Tibial artery (tissue), 4 donors: ENCODE measurements at regions of chr17 and their contacts with region 1.

Region 1: GRCh38 chr17:51153210-51154072 is at the start of gene NME1:
- DNase-seq: peak; percentile 96 to 98
- H3K4me3 ChIP-seq: peak within 1 kb of the TSS; percentile 62 to 83
- H3K27ac ChIP-seq: peak within 1 kb of the TSS; percentile 79 to 82
- H3K4me1 ChIP-seq: peaks cover 0 to 21% (median 6%) of the 10 kb centered on the region in 4 donors
- H3K27me3 ChIP-seq: no peaks in the 10 kb centered on the region
- CTCF ChIP-seq: peak; percentile 66 to 79

Region 2: DNA sequence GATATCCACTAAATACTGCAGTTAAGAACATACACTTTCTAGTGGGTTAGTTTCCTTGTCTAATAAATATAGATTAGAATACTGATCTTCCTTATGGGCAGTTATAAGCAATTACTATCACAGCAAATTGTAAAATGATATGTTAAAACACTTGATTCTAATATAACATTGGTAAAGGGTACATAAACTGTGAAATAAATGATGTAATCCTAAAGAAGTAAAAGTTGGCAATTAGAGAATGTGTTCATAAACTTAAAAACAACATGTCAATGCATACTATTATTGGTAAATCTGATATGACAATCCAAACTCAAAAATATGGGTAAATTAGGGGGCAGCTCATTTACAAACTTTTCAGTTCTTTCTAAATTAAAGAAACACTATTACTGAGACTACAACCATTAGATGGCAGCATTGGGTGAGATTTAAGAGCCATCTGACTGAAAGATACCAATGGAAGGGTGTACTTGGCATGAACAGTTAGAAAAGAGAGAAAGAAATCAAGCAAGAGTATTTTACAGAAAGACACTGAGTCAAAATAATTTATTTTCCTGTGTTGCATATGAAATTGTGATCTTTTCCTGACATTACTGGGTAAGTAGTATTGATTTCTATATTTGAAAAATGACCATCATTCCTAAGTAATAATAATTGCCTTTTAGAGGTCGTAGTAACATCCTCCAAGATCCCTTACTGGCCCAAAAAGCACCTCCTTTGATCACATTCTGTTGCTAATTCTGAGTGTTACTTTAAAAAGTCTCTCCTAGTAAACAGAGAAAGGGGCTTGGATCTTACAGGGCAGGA is 152.4 kb before region 1 on chr17:
- intact Hi-C with region 1: loop called (anchors 2 kb)
- DNase-seq: no peak
- H3K4me3 ChIP-seq: no peak overlapping the region
- H3K27ac ChIP-seq: no peak overlapping the region
- H3K4me1 ChIP-seq: no peaks in the 10 kb centered on the region
- H3K27me3 ChIP-seq: no peaks in the 10 kb centered on the region
- CTCF ChIP-seq: peak; percentile 40 to 70

Region 3: GRCh38 chr17:51120739-51121617 is 32.5 kb before region 1 on chr17 and contains the start of gene SPAG9:
- intact Hi-C with region 1: loop called (anchors 2 kb)
- DNase-seq: peak; percentile 97 to 99
- H3K4me3 ChIP-seq: peak within 1 kb of the TSS; percentile 86 to 98
- H3K27ac ChIP-seq: peak within 1 kb of the TSS; percentile 97 to 99
- H3K4me1 ChIP-seq: peaks cover 0 to 41% (median 30%) of the 10 kb centered on the region in 4 donors
- H3K27me3 ChIP-seq: no peaks in the 10 kb centered on the region
- CTCF ChIP-seq: no peak

Region 4: GRCh38 chr17:51166197-51166986 is 13.0 kb after region 1 on chr17 and contains the start of gene NME2:
- intact Hi-C with region 1: loop called (anchors 2 kb)
- DNase-seq: peak; percentile 91 to 95
- H3K4me3 ChIP-seq: peak within 1 kb of the TSS; percentile 98 to 99
- H3K27ac ChIP-seq: peak within 1 kb of the TSS; percentile 88 to 98
- H3K4me1 ChIP-seq: peaks cover 0 to 21% (median 15%) of the 10 kb centered on the region in 4 donors
- H3K27me3 ChIP-seq: no peaks in the 10 kb centered on the region
- CTCF ChIP-seq: no peak